Dorsolateral prefrontal cortex (tissue), 120 donors: ENCODE measurements at regions of chr2 and their contacts with region 1.

Region 1: DNA sequence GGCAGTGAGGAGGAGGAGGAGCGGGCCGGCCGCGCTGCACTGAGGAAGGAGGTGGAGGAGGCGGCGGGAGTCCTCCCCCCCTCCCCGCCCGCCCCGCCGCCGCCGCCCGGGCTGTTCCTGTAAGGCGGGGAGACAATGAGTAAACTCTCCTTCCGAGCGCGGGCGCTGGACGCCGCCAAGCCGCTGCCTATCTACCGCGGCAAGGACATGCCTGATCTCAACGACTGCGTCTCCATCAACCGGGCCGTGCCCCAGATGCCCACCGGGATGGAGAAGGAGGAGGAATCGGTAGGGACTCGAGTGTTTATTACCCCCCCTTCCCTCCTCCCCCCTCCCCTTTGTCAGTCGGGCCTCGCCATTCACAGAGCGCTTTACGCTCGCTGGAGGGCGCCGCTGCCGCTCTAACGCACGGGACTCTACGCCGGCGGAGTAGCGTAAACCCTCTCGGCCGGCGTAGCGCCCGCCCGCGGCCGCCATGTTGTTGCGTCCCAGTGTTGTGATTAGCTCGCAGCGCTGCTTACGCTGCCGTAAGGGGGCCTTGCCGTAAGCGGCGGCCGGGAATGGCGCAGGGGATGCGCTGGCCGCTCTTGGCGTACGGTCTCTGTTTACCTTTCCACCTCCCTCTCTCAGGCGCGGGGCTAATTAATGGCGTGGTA is 460 bp downstream of the EPC2 start:
- DNase-seq: peak; percentile 91 to 96 (median 94)
- H3K4me3 ChIP-seq: peak overlapping the region; percentile 62 to 100 (median 94)
- H3K27ac ChIP-seq: peak overlapping the region; percentile 89 to 100 (median 99)
- H3K27me3 ChIP-seq: no peaks in the 10 kb centered on the region
- CTCF ChIP-seq: peak in 46 of 56 donors; percentile 13 to 62 (median 36)

Region 2: GRCh38 chr2:148020111-148021058 is 624.6 kb before region 1 on chr2 and contains the start of gene ORC4:
- intact Hi-C with region 1: loop called in 1 of 2 experiments (anchors 10 kb)
- DNase-seq: peak; percentile 92 to 98 (median 97)
- H3K4me3 ChIP-seq: peak within 1 kb of the TSS; percentile 59 to 99 (median 91)
- H3K27ac ChIP-seq: peak within 1 kb of the TSS; percentile 73 to 98 (median 91)
- H3K27me3 ChIP-seq: no peaks in the 10 kb centered on the region
- CTCF ChIP-seq: peak in 39 of 56 donors; percentile 7 to 48 (median 33)
- total RNA-seq, gene ORC4: 40.1 to 94.4 (median 74.7) TPM

Region 3: GRCh38 chr2:148813603-148814065 is 168.6 kb after region 1 on chr2:
- intact Hi-C with region 1: loop called in 1 of 2 experiments (anchors 10 kb)
- DNase-seq: no peak
- H3K4me3 ChIP-seq: no peak overlapping the region
- H3K27ac ChIP-seq: no peak overlapping the region
- H3K27me3 ChIP-seq: no peaks in the 10 kb centered on the region
- CTCF ChIP-seq: no peak

Region 4: DNA sequence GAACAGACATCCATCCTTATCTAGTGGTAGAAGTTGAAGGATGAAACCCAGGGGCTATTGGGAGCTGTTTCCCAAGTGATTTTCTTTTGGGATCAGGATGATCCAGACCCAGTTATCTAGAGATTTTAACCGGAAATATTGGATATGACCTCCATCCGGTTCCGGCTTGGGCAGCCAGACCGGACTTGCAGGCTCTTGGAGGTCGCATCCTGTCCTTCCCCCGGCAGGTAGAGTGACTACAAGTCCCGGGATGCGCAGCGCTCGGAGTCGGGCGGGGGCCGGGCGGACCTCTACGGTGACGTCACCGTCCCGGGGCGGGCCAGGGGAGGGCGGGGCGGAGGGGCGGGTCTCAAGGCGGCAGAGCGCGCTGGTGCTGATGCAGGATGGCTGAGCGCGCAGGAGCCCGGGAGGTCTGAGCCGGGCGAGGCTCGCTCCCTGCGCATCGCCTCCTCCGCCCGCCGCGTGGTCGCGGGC is 229.9 kb after region 1 on chr2 and contains the start of gene KIF5C:
- intact Hi-C with region 1: loop called (anchors 2 kb)
- DNase-seq: peak; percentile 84 to 96 (median 92)
- H3K4me3 ChIP-seq: peak within 1 kb of the TSS; percentile 52 to 97 (median 88)
- H3K27ac ChIP-seq: peak within 1 kb of the TSS; percentile 20 to 94 (median 89)
- H3K27me3 ChIP-seq: no peaks in the 10 kb centered on the region
- CTCF ChIP-seq: peak in 4 of 56 donors; percentile 8 to 19 (median 12)
- total RNA-seq, gene KIF5C: 329 to 792 (median 457) TPM

Region 5: GRCh38 chr2:148926291-148926961 is 281.4 kb after region 1 on chr2:
- intact Hi-C with region 1: loop called in 1 of 2 experiments (anchors 2 kb)
- DNase-seq: peak; percentile 58 to 92 (median 72)
- H3K4me3 ChIP-seq: peak overlapping the region in 44 of 59 donors; percentile 1 to 52 (median 28)
- H3K27ac ChIP-seq: peak overlapping the region; percentile 7 to 98 (median 91)
- H3K27me3 ChIP-seq: no peaks in the 10 kb centered on the region
- CTCF ChIP-seq: peak; percentile 50 to 84 (median 71)

Region 6: DNA sequence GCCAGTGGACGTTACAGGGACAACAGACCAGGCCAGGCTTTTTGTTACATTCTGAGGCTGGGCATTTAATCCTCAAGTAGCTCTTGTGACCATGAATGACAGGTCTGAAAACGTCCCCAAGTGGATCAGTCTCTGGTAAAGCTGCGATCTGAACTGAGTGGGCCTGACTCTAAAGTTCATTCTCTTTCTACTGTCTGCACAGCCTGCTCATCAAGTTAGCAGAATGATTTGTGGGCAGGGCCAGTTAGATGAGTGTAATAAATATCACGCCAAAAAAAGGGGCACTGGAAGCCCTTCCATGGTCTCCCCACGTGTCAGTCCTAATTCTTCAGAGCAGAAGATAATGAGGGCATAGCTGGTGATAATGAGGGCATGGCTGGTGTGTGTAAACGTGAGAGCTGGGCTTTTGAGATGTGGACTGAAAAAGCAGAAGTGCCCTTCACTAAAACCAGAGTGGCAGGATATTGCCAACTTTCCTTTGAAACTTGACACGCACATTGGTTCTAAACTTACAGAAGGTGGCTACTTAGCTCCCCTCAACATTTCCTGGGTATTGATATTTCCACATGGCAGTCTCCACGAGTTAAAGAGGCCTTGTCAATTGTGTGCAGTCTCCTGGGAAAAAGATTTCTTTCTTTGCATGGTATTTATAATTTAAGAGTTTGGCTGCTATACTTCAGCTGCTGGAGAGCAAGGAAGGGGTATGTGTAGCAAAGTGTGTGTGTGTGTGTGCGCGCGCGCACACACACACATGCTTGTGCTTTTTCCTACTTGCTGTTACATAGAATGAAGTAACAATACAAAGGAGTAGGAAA is 320.8 kb after region 1 on chr2:
- intact Hi-C with region 1: loop called in 1 of 2 experiments (anchors 5 kb)
- DNase-seq: no peak
- H3K4me3 ChIP-seq: no peak overlapping the region
- H3K27ac ChIP-seq: peak overlapping the region in 46 of 59 donors; percentile 0 to 90 (median 61)
- H3K27me3 ChIP-seq: no peaks in the 10 kb centered on the region
- CTCF ChIP-seq: no peak

Region 7: GRCh38 chr2:148989882-148990493 is 345.0 kb after region 1 on chr2:
- intact Hi-C with region 1: loop called (anchors 5 kb)
- DNase-seq: peak in 3 of 10 donors; percentile 58 to 83 (median 78)
- H3K4me3 ChIP-seq: no peak overlapping the region
- H3K27ac ChIP-seq: peak overlapping the region in 8 of 59 donors; percentile 3 to 51 (median 26)
- H3K27me3 ChIP-seq: no peaks in the 10 kb centered on the region
- CTCF ChIP-seq: peak; percentile 50 to 94 (median 80)